ENCODE measurements at regions of chr4 and their contacts with region 1.

Region 1: GRCh38 chr4:169238445-169238844 is 32.3 kb downstream of the SH3RF1 start:
- DNase-seq: peak; percentile 9 to 16
- ATAC-seq: peak; percentile 91
- H3K4me3 ChIP-seq: no peak overlapping the region
- H3K27ac ChIP-seq: peak overlapping the region in 2 of 4 donors; percentile 16 to 48
- H3K4me1 ChIP-seq: peaks cover 51 to 53% of the 10 kb centered on the region in 2 donors
- H3K27me3 ChIP-seq: no peaks in the 10 kb centered on the region
- CTCF ChIP-seq: no peak
- POLR2A ChIP-seq: no peak

Region 2: GRCh38 chr4:169270810-169271691 is 32.6 kb after region 1 on chr4 and contains the start of gene SH3RF1:
- in situ Hi-C with region 1: no loop called
- intact Hi-C with region 1: loop called (anchors 2 kb)
- DNase-seq: peak; percentile 81 to 83
- ATAC-seq: peak; percentile 85 to 88
- H3K4me3 ChIP-seq: peak within 1 kb of the TSS; percentile 73 to 95 (median 92)
- H3K27ac ChIP-seq: peak within 1 kb of the TSS; percentile 87 to 95 (median 94)
- H3K4me1 ChIP-seq: peaks cover 22 to 24% of the 10 kb centered on the region in 2 donors
- H3K27me3 ChIP-seq: no peaks in the 10 kb centered on the region
- CTCF ChIP-seq: peak in 3 of 5 experiments; percentile 35 to 52 (median 44)
- POLR2A ChIP-seq: peak; percentile 89 to 95
- total RNA-seq, gene SH3RF1: 12.6 to 27.0 (median 13.4) TPM

Region 3: GRCh38 chr4:169293343-169294176 is 55.1 kb after region 1 on chr4:
- in situ Hi-C with region 1: no loop called
- intact Hi-C with region 1: no loop called
- DNase-seq: no peak
- ATAC-seq: no peak
- H3K4me3 ChIP-seq: no peak overlapping the region
- H3K27ac ChIP-seq: no peak overlapping the region
- H3K4me1 ChIP-seq: no peaks in the 10 kb centered on the region
- H3K27me3 ChIP-seq: no peaks in the 10 kb centered on the region
- CTCF ChIP-seq: no peak
- POLR2A ChIP-seq: no peak

Region 4: DNA sequence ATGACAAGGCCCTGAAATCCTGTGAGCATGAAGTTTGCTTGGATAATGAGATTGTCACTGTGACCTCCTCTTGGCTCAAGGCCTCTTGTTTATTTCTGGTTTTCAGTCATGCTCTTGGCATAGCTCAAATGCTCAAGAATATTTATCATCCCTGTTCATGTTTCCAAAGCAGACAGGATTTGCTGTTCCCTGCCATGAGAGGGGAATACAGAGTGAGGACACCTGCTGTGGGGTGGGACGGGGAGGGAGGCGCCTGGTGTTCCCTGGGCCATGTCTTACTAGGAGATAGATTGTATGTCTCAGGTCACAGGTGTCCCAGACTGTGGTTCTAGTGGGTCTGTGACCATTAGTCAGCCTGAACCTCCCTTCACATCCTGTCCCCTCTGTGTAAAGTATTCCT is 67.2 kb after region 1 on chr4:
- in situ Hi-C with region 1: no loop called
- intact Hi-C with region 1: loop called (anchors 5 kb)
- DNase-seq: peak; percentile 85 to 86
- ATAC-seq: peak; percentile 98
- H3K4me3 ChIP-seq: no peak overlapping the region
- H3K27ac ChIP-seq: peak overlapping the region; percentile 73 to 87 (median 83)
- H3K4me1 ChIP-seq: peaks cover 13 to 14% of the 10 kb centered on the region in 2 donors
- H3K27me3 ChIP-seq: no peaks in the 10 kb centered on the region
- CTCF ChIP-seq: peak in 1 of 5 experiments; percentile 11
- POLR2A ChIP-seq: peak; percentile 12 to 28

Region 5: DNA sequence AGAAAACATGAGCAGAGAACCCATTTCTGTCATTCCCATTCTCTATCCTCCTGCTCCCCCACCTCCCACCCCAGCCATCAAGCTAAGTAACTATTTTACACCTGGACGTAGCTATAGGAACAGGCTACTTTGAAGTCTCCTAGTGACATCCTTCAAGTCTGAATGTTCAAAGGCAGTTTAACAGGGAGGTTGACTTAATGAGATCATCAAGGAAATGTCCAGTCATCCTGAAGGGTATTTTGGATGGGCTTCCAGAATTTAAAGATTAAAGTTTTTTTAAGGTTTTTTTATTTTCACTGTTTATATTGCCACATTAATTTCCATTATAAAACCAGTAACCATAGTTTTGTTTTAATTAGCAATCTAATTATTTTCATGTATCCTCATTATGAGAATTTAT is 478.2 kb after region 1 on chr4:
- in situ Hi-C with region 1: no loop called
- intact Hi-C with region 1: no loop called
- DNase-seq: no peak
- ATAC-seq: no peak
- H3K4me3 ChIP-seq: no peak overlapping the region
- H3K27ac ChIP-seq: no peak overlapping the region
- H3K4me1 ChIP-seq: no peaks in the 10 kb centered on the region
- H3K27me3 ChIP-seq: no peaks in the 10 kb centered on the region
- CTCF ChIP-seq: no peak
- POLR2A ChIP-seq: no peak

Measured in gastrocnemius medialis (tissue), 4 donors.